Endothelial cell of umbilical vein (primary cell): ENCODE measurements at regions of chr10 and their contacts with region 1.

Region 1: DNA sequence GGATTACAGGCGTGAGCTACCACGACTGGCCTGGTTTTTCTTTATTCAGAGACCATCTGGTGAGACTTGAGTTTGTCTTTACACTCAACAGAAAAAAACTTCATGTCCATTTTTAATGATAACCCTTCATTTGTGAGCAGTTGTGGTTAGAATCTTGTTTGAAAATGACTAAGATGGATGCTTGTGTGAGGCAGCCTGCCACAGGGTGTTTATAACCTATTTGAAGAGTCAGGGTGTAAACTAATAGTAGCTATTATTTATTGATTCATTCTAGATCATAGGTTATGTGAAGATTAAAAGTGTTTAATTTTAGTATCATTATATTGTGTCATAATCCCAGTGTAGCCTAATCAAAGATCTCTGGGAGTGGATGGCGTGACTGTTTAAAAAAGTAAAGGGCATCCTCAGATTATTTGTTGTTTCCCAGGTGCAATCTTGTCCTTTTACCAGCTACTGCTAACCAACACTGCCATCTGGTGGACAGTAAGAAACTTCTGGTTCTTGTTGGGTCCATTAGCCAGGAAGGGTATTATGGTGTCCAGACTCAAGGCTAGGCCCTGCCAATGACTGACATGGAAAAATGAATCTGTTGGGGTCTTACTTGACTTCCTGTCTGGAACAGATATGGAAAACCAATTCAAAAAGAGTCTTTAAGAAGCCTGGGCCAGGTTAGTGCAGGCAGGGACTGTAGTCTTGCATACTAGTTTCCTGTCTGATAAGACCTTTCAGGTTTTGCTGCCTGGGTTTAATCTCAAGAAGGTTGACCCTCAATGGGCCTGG is 24.9 kb downstream of the NRBF2 start:
- DNase-seq: peak; percentile 74
- H3K4me3 ChIP-seq: no peak overlapping the region
- H3K27ac ChIP-seq: no peak overlapping the region
- H3K4me1 ChIP-seq: no peaks in the 10 kb centered on the region
- H3K27me3 ChIP-seq: no peaks in the 10 kb centered on the region
- CTCF ChIP-seq: peak; percentile 65 to 71
- POLR2A ChIP-seq: no peak

Region 2: DNA sequence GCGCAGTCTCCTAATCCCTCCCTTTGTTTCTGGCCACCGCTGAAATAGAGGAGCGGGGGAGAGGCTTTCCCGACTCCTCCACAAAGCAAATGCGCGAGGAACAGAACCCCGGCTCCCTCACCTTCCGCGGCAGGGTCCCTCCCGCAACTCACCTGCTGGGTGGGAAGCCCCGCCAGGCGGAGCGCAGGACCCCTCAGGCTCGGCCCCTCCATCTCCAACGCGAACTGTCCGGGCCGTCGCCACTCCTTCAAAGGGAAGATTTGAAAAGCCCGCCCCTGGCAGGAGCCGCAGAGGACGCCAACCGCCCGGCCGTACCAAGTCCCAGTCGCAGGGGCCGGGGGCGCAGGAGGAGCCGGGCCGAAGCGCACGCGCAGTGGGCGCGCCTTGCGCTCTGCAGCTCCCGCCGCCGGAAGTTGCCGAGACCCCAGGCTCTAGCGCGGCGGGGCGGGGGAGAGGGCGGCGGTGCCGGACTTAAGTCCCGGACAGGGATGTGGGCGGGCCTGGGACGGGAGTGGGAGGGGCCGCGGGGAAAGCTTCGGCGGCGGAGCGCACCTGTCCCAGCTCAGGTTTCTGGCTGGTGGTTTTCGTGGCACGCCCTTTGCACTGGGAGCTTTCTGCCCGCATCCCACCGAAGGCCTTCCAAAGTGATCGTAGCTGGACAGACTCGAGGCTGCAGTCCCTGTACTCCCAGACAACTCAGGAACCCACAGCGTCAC is 889.5 kb before region 1 on chr10 and contains the start of gene RTKN2:
- CTCF ChIA-PET with region 1: interaction called, 5 read pairs
- POLR2A ChIA-PET with region 1: no interaction called
- dilution Hi-C with region 1: no loop called
- intact Hi-C with region 1: loop called (anchors 5 kb)
- DNase-seq: peak; percentile 85
- H3K4me3 ChIP-seq: peak within 1 kb of the TSS; percentile 53 to 73 (median 72)
- H3K27ac ChIP-seq: no peak within 1 kb of the TSS
- H3K4me1 ChIP-seq: peaks cover 11% of the 10 kb centered on the region
- H3K27me3 ChIP-seq: peaks cover 0 to 2% of the 10 kb centered on the region in 2 experiments
- CTCF ChIP-seq: no peak
- POLR2A ChIP-seq: no peak
- total RNA-seq, gene RTKN2: 4.8 and 5.5 TPM in 2 replicates

Region 3: GRCh38 chr10:62492012-62492869 is 665.8 kb before region 1 on chr10:
- CTCF ChIA-PET with region 1: interaction called, 17 read pairs
- POLR2A ChIA-PET with region 1: no interaction called
- dilution Hi-C with region 1: no loop called
- intact Hi-C with region 1: loop called (anchors 2 kb)
- DNase-seq: peak; percentile 6
- H3K4me3 ChIP-seq: no peak overlapping the region
- H3K27ac ChIP-seq: no peak overlapping the region
- H3K4me1 ChIP-seq: no peaks in the 10 kb centered on the region
- H3K27me3 ChIP-seq: no peaks in the 10 kb centered on the region
- CTCF ChIP-seq: peak in 1 of 2 donors; percentile 30
- POLR2A ChIP-seq: no peak

Region 4: GRCh38 chr10:62594093-62594520 is 563.9 kb before region 1 on chr10:
- CTCF ChIA-PET with region 1: interaction called, 74 read pairs
- POLR2A ChIA-PET with region 1: no interaction called
- dilution Hi-C with region 1: no loop called
- intact Hi-C with region 1: loop called (anchors 1 kb)
- DNase-seq: peak; percentile 51
- H3K4me3 ChIP-seq: no peak overlapping the region
- H3K27ac ChIP-seq: no peak overlapping the region
- H3K4me1 ChIP-seq: peaks cover 7% of the 10 kb centered on the region
- H3K27me3 ChIP-seq: peaks cover 0 to 2% of the 10 kb centered on the region in 2 experiments
- CTCF ChIP-seq: peak; percentile 74 to 81
- POLR2A ChIP-seq: no peak

Region 5: GRCh38 chr10:63003816-63004453 is 154.1 kb before region 1 on chr10:
- CTCF ChIA-PET with region 1: interaction called, 4 read pairs
- POLR2A ChIA-PET with region 1: no interaction called
- dilution Hi-C with region 1: no loop called
- intact Hi-C with region 1: loop called (anchors 5 kb)
- DNase-seq: no peak
- H3K4me3 ChIP-seq: no peak overlapping the region
- H3K27ac ChIP-seq: no peak overlapping the region
- H3K4me1 ChIP-seq: no peaks in the 10 kb centered on the region
- H3K27me3 ChIP-seq: no peaks in the 10 kb centered on the region
- CTCF ChIP-seq: peak in 1 of 2 donors; percentile 16
- POLR2A ChIP-seq: no peak

Region 6: DNA sequence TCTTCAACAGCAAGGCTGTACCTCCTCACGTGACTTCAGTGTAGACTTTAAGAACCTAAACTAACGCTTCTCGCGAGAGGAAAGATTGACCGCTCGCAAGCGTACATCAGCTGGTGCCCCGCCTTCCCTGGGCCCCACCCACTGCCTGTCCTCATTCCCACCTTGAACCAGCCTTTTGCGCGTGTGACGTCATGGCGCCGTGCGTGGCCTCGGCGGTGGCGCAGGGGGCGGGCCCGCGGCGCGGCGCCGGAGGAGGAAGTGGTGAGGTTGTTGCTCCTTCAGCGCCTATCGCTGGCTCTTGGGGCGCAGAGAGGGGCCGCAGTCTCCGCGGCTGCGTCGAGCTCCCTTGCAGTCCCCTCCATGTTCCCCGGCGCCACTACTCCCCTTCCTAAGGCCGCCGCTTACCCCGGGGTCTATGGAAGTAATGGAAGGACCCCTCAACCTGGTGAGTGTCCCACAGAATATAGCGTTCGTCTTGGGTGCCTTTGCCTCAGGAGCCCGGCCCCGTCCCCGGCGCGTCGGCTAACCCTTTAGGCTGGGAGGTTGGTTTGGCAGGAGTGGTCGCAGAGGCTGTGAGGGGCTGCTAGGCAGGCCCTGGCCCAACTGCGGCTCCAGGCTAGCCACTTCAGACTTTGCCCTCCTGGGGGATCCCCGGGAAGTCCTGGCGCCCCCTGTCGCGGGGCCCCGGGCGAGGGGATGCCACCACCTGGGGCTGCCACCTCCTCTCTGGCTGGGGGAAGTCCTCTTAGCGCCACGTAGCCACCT is 24.8 kb before region 1 on chr10 and contains the start of gene NRBF2:
- CTCF ChIA-PET with region 1: interaction called, 19 read pairs
- POLR2A ChIA-PET with region 1: interaction called, 3 read pairs
- dilution Hi-C with region 1: no loop called
- intact Hi-C with region 1: no loop called
- DNase-seq: peak; percentile 98
- H3K4me3 ChIP-seq: peak within 1 kb of the TSS; percentile 48 to 73 (median 69)
- H3K27ac ChIP-seq: peak within 1 kb of the TSS; percentile 78
- H3K4me1 ChIP-seq: peaks cover 7% of the 10 kb centered on the region
- H3K27me3 ChIP-seq: no peaks in the 10 kb centered on the region
- CTCF ChIP-seq: peak; percentile 10 to 24
- POLR2A ChIP-seq: peak; percentile 97
- total RNA-seq, gene NRBF2: 17.0 and 17.7 TPM in 2 replicates

Region 7: DNA sequence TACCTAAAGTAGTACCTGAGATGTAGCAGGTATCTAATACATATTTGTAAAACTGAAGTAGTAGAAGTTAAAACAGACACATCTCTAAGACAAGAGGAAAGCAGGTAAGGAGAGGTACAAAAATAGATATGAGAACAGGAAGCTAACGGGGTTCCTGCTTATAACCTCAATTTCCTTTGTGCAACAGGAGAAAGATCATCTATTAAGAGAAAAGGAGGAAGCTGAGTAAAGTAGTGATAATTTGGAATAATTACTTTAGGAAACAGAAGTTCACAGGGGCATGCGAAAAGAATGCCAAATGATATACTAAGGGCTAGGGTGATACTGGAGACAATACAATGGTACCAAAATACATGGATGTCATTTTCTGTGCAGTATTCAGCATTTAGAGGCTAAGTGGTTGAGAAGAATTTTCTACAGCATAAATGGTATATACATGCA is 83.8 kb after region 1 on chr10:
- CTCF ChIA-PET with region 1: no interaction called
- POLR2A ChIA-PET with region 1: no interaction called
- dilution Hi-C with region 1: no loop called
- intact Hi-C with region 1: no loop called
- DNase-seq: peak; percentile 82
- H3K4me3 ChIP-seq: peak overlapping the region in 1 of 3 experiments; percentile 19
- H3K27ac ChIP-seq: peak overlapping the region; percentile 67
- H3K4me1 ChIP-seq: peaks cover 59% of the 10 kb centered on the region
- H3K27me3 ChIP-seq: no peaks in the 10 kb centered on the region
- CTCF ChIP-seq: no peak
- POLR2A ChIP-seq: peak; percentile 32

Region 8: GRCh38 chr10:63388421-63389031 is 230.5 kb after region 1 on chr10:
- CTCF ChIA-PET with region 1: no interaction called
- POLR2A ChIA-PET with region 1: no interaction called
- dilution Hi-C with region 1: no loop called
- intact Hi-C with region 1: no loop called
- DNase-seq: no peak
- H3K4me3 ChIP-seq: no peak overlapping the region
- H3K27ac ChIP-seq: no peak overlapping the region
- H3K4me1 ChIP-seq: no peaks in the 10 kb centered on the region
- H3K27me3 ChIP-seq: no peaks in the 10 kb centered on the region
- CTCF ChIP-seq: no peak
- POLR2A ChIP-seq: no peak

Region 9: DNA sequence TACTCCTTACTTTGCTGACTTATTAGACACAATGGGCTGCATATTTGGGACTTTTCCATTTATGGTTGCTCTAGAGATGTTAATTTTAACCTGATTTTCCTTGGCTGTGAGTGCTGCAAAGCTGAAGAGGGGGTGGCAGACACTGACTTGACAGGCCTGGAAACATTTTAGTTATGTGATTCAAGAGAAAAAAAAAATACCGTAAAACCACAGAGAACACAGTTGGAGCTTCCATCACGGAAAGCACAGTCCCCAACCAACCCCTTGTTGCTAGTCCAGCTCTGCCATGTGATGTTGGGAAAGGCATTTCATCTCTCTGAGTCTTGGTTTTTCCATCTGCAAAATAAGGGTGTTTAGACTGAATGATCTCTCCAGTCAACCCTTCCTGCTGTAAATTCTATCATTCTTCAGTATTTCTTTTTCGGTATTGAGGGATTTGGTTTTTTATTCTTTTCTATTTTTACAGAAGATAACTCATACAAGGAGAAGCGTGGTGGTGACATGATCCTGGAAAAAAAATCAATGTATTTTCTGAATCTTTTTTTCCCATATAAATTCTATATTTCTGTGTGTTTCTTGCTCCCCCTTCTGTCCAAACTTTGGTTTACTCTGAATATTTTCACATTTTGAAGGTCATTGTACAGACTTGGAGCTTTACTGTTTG is 609.2 kb after region 1 on chr10:
- CTCF ChIA-PET with region 1: interaction called, 6 read pairs
- POLR2A ChIA-PET with region 1: no interaction called
- dilution Hi-C with region 1: no loop called
- intact Hi-C with region 1: loop called (anchors 2 kb)
- DNase-seq: peak; percentile 70
- H3K4me3 ChIP-seq: no peak overlapping the region
- H3K27ac ChIP-seq: no peak overlapping the region
- H3K4me1 ChIP-seq: no peaks in the 10 kb centered on the region
- H3K27me3 ChIP-seq: no peaks in the 10 kb centered on the region
- CTCF ChIP-seq: peak in 1 of 2 donors; percentile 33
- POLR2A ChIP-seq: no peak